WTC11 (cell line): ENCODE measurements at regions of chr2 and their contacts with region 1.

Region 1: GRCh38 chr2:219560037-219560892 is 11.1 kb downstream of the OBSL1 start:
- DNase-seq: no peak
- ATAC-seq: peak; percentile 4
- H3K4me3 Mint-ChIP-seq: no peak overlapping the region
- H3K27ac Mint-ChIP-seq: peak overlapping the region; percentile 84
- H3K4me1 Mint-ChIP-seq: peaks cover 56% of the 10 kb centered on the region
- H3K27me3 Mint-ChIP-seq: peaks cover 4% of the 10 kb centered on the region; the same call in 1 of the 2 replicates
- CTCF ChIP-seq: peak; percentile 91

Region 2: DNA sequence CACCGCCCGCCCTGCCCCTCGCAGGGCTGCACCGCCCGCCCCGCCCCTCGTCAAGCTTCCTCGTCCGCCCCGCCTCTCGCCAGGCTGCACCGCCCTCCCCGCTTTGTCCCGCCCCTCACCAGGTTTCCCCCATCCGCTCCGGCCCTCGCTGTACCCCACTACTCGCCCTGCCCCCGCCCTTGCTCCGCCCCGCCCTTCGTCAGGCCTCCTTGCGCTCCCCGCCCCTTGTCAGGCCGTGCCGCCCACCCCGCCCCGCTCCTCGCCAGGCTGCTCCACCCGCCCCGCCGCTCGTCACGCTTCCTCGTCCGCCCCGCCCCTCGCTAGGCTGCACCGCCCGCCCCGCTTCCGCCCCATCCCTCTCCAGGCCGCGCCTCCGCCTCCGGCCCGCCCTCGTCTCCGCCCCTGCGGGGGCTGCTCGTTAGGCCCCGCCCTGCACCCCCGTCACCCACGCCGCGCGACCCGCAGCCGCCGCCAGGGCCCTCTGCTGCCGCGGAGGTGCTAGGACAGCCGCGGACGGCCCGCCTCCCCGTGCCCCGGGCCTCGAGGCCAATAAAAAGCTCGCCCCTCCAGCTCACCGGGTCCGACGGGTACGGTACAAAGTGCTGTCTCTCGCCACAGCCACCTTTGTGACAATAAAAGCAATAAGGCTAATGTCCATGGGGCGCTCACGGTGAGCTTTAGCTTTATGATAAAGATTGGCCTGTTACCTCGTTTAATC is 172.0 kb before region 1 on chr2:
- CTCF ChIA-PET with region 1: interaction called, 22 read pairs
- POLR2A ChIA-PET with region 1: no interaction called
- DNase-seq: peak; percentile 97
- ATAC-seq: peak; percentile 76
- H3K4me3 Mint-ChIP-seq: peak overlapping the region; percentile 76
- H3K27ac Mint-ChIP-seq: no peak overlapping the region; the same call in 1 of the 2 replicates
- H3K4me1 Mint-ChIP-seq: peaks cover 7% of the 10 kb centered on the region
- H3K27me3 Mint-ChIP-seq: 0 out of 2 replicates have a peak, but pooled peaks cover 3% of the 10 kb centered on the region
- CTCF ChIP-seq: no peak

Region 3: DNA sequence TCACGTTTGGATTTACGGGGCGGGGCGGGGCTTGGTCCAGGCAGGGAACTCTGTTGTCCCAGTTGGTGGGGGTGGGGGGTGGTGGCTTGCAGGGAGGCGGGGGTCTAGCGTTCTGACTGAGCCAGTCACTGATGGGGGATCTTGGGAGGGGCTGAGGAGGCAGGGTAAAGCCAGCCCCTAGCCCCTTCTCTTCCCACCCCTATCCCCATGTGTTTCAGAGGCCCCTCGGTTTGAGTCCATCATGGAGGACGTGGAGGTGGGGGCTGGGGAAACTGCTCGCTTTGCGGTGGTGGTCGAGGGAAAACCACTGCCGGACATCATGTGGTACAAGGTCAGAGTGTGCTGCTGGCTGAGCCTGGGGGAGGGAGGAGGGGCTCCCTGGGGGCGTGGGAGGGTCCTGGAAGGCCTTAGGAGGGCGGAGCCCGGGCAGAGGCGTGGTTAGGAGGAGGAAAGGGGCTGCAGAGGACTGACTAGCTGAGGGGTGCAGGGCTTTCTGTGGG is 83.6 kb before region 1 on chr2:
- CTCF ChIA-PET with region 1: no interaction called
- POLR2A ChIA-PET with region 1: no interaction called
- DNase-seq: peak; percentile 94
- ATAC-seq: peak; percentile 93
- H3K4me3 Mint-ChIP-seq: peak overlapping the region; percentile 68
- H3K27ac Mint-ChIP-seq: peak overlapping the region; percentile 81; the same call in 1 of the 2 replicates
- H3K4me1 Mint-ChIP-seq: peaks cover 24% of the 10 kb centered on the region
- H3K27me3 Mint-ChIP-seq: no peaks in the 10 kb centered on the region
- CTCF ChIP-seq: no peak

Region 4: DNA sequence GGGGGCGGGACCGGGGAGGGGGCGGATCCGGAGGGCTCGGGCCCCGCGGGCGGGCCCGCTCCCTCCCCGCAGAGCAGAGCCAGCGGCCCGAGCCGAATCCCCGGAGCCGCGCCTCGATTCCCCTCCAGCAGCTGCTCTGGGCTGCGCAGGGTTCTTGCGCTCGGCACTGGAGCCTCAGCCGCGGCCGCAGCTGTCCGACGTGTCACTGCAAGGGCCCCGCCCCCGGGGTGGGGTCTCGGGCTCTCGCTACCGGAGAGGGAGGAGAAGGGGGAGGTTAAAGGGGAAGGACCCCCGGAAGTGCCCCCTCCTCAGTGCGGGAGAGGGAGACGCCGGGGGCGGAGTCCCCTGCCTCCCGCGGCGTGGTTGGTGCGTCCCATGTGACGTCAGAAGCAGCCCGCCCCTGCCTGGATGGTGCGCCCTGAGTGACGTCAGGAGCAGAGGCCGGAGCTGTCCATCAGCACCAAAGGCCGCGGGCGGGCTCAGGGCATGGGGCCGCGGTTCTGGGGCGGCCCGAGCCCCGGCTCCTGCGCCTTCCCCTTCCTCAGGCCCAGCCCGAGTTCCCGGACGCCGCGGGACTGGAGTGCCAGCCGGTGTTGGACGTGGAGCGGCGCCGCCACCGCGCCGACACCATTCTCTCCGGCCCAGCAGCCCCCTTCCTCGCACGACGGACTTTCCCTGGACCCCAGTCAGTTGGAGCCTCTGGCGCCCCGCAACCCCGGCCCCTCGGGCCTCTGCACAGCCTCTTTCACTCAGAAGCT is 16.5 kb before region 1 on chr2 and contains the starts of genes CHPF and TMEM198:
- CTCF ChIA-PET with region 1: interaction called, 86 read pairs
- POLR2A ChIA-PET with region 1: interaction called, 4 read pairs
- DNase-seq: peak; percentile 99
- ATAC-seq: peak; percentile 84
- H3K4me3 Mint-ChIP-seq: peak within 1 kb of the TSS; percentile 86
- H3K27ac Mint-ChIP-seq: no peak within 1 kb of the TSS
- H3K4me1 Mint-ChIP-seq: peaks cover 18% of the 10 kb centered on the region
- H3K27me3 Mint-ChIP-seq: peaks cover 28% of the 10 kb centered on the region
- CTCF ChIP-seq: no peak
- total RNA-seq, gene CHPF: 84.3 to 97.0 TPM (median 84.8 TPM) in 3 replicates
- total RNA-seq, gene TMEM198: 7.1 to 8.1 TPM (median 7.3 TPM) in 3 replicates

Region 5: GRCh38 chr2:219576493-219577388 is 16.5 kb after region 1 on chr2:
- CTCF ChIA-PET with region 1: interaction called, 66 read pairs
- POLR2A ChIA-PET with region 1: interaction called, 29 read pairs
- DNase-seq: peak; percentile 65
- ATAC-seq: peak; percentile 86
- H3K4me3 Mint-ChIP-seq: peak overlapping the region; percentile 35
- H3K27ac Mint-ChIP-seq: peak overlapping the region; percentile 76; the same call in 1 of the 2 replicates
- H3K4me1 Mint-ChIP-seq: peaks cover 57% of the 10 kb centered on the region
- H3K27me3 Mint-ChIP-seq: peaks cover 26% of the 10 kb centered on the region
- CTCF ChIP-seq: no peak

Region 6: GRCh38 chr2:219642465-219643080 is 82.3 kb after region 1 on chr2:
- CTCF ChIA-PET with region 1: interaction called, 18 read pairs
- POLR2A ChIA-PET with region 1: no interaction called
- DNase-seq: peak; percentile 99
- ATAC-seq: peak; percentile 91
- H3K4me3 Mint-ChIP-seq: peak overlapping the region; percentile 26; the same call in 1 of the 2 replicates
- H3K27ac Mint-ChIP-seq: no peak overlapping the region
- H3K4me1 Mint-ChIP-seq: peaks cover 27% of the 10 kb centered on the region
- H3K27me3 Mint-ChIP-seq: peaks cover 6% of the 10 kb centered on the region; the same call in 1 of the 2 replicates
- CTCF ChIP-seq: peak; percentile 88